ENCODE measurements at regions of chr19 and their contacts with region 1.

Region 1: DNA sequence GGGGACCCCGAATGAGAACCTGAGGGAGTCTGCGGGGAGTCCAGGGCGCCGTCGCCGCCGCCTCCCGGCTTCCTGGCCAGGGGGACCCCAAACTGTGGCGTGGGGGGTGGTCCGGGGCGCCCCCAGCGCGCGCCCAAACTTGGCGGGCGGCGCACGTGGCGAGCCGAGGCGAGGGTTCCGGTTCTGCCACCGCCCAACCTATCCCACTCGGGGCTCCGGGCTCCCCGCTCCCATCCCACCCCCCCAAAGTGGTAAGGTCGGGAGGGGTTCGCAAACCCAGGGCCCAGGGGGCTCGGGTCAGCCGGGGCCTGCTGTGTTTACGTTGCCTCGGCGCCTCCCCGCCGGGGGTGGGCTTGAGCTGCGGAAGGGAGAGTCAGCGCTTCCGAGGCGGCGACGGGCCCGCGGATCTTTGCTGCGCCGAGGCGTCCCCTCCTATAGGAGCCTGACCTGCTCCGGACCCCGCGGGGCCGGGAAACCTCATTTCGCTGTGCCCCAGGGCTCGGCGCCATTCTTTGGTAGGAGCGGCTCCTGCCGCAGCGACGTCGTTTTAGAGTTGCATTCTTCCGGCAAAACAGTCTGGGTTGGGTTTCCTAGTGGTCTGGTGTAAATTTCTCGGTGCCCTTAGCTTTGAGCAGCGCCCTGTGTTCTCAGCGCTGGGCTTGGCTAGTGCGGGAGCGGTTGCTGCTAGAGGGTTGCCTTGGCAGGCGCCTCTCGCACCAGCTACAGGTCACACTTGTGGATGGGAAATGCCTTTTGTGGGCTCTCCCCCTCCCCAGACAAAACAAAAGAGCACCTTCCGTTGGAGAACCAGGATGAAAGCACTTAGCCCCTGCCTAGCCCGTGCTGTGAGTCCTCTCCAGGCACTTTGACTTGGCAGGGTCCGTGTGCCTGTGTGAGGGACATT is 1.2 kb downstream of the DAZAP1 start:
- DNase-seq: peak; percentile 74
- ATAC-seq: peak; percentile 26
- H3K4me3 Mint-ChIP-seq: peak overlapping the region; percentile 94
- H3K27ac Mint-ChIP-seq: peak overlapping the region; percentile 94
- H3K4me1 Mint-ChIP-seq: peaks cover 36% of the 10 kb centered on the region
- H3K27me3 Mint-ChIP-seq: no peaks in the 10 kb centered on the region

Region 2: DNA sequence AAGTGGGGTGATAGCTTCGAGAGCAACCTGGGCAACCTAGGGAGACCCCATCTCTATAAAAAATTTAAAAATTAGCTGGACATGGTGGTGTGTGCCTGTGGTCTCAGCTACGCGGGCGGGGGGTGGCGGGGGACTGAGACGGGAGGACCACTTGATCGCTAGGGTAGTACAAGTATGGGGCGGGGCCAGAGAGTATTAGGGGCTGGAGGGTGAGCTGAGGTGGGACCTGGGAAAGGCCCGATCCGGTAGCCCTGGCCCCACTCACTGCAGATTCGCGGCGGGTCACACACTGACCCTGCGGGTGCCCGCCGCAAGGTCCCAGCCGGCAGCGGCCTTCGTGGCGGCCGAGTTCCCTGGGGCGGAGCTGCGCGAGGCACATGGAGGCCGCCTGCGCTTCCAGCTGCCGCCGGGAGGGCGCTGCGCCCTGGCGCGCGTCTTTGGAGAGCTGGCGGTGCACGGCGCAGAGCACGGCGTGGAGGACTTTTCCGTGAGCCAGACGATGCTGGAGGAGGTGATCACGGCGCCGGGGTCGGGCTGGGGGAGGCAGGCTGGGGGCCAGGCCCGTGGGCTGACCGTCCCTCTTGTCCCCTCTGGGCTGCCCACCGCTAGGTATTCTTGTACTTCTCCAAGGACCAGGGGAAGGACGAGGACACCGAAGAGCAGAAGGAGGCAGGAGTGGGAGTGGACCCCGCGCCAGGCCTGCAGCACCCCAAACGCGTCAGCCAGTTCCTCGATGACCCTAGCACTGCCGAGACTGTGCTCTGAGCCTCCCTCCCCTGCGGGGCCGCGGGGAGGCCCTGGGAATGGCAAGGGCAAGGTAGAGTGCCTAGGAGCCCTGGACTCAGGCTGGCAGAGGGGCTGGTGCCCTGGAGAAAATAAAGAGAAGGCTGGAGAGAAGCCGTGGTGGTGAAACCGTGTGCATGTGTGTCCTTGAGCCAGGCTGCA is 343.6 kb before region 1 on chr19:
- POLR2A ChIA-PET with region 1: no interaction called
- DNase-seq: peak; percentile 83
- ATAC-seq: peak; percentile 39
- H3K4me3 Mint-ChIP-seq: peak overlapping the region; percentile 61
- H3K27ac Mint-ChIP-seq: peak overlapping the region; percentile 69
- H3K4me1 Mint-ChIP-seq: peaks cover 20% of the 10 kb centered on the region
- H3K27me3 Mint-ChIP-seq: no peaks in the 10 kb centered on the region

Region 3: GRCh38 chr19:1438035-1438932 is 29.7 kb after region 1 on chr19 and contains the start of gene RPS15:
- POLR2A ChIA-PET with region 1: interaction called, 12 read pairs
- DNase-seq: peak; percentile 99
- ATAC-seq: peak; percentile 84
- H3K4me3 Mint-ChIP-seq: peak within 1 kb of the TSS; percentile 99
- H3K27ac Mint-ChIP-seq: peak within 1 kb of the TSS; percentile 99
- H3K4me1 Mint-ChIP-seq: peaks cover 9% of the 10 kb centered on the region
- H3K27me3 Mint-ChIP-seq: no peaks in the 10 kb centered on the region
- total RNA-seq, gene RPS15: 1,438 to 1,457 TPM

Measured in activated naive CD8-positive, alpha-beta T cell treated with anti-CD3 and anti-CD28 coated beads, Interleukin-2, amount 10 ng/mL, durations not matched to agents 7 days and 5 days (primary cell).